ENCODE measurements at regions of chr19 and their contacts with region 1.

Region 1: DNA sequence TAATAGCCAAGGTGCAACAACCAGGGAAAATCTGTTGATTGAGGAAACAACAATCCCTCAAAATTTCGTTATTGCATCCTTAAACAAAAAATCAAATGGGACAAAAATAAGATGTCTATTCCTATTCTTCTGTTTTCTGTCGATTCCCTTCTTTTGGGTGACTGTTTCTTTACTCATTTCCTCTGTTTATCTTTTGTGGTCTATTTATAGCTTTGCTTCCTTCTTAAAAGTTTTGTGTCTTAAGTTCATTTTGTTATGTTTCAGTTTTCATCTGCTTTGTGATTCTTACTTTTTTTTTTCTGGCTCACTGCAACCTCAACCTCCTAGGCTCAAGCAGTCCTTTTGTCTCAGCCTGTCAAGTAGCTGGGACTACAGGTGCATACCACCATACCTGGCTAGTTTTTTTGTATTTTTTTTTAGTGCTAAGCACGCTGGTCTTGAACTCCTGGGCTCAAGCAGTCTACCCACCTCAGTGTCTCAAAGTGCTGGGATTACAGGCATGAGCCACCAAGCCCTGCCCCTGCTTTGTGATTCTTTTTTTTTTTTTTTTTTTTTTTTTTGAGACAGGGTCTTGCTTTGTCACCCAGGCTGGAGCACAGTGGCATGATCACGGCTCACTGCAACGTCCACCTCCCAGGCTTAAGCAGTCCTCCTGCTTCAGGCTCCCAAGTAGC is 10.4 kb downstream of the ZNF146 start:
- DNase-seq: no peak
- ATAC-seq: no peak
- H3K4me3 ChIP-seq: no peak overlapping the region
- H3K27ac ChIP-seq: no peak overlapping the region
- H3K4me1 ChIP-seq: peaks cover 3% of the 10 kb centered on the region; the same call in 1 of the 2 replicates
- H3K27me3 ChIP-seq: no peaks in the 10 kb centered on the region
- CTCF ChIP-seq: no peak

Region 2: DNA sequence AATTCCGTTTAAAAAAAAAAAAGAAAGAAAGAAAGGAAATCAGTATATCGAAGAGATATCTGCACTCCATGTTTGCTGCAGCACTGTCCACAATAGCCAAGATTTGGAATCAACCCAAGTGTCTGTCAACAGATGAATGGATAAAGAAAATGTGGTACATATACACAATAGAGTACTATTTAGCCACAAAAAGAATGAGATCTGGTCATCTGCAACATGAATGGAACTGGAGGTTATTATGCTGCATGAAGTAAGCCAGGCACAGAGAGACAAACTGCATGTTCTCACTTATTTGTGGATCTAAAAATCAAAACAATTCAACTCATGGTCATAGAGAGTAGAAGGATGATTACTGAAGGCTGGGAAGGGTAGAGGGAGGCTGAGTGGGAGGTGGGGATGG is 27.2 kb before region 1 on chr19:
- CTCF ChIA-PET with region 1: interaction called, 14 read pairs
- POLR2A ChIA-PET with region 1: no interaction called
- in situ Hi-C with region 1: no loop called
- intact Hi-C with region 1: no loop called
- DNase-seq: no peak
- ATAC-seq: no peak
- H3K4me3 ChIP-seq: no peak overlapping the region
- H3K27ac ChIP-seq: no peak overlapping the region
- H3K4me1 ChIP-seq: no peaks in the 10 kb centered on the region
- H3K27me3 ChIP-seq: no peaks in the 10 kb centered on the region
- CTCF ChIP-seq: no peak

Region 3: GRCh38 chr19:36214386-36215275 is 10.7 kb before region 1 on chr19 and contains the starts of genes ZNF146 and ZNF565:
- CTCF ChIA-PET with region 1: no interaction called
- POLR2A ChIA-PET with region 1: interaction called, 11 read pairs
- in situ Hi-C with region 1: no loop called
- intact Hi-C with region 1: no loop called
- DNase-seq: peak; percentile 98
- ATAC-seq: peak; percentile 98
- H3K4me3 ChIP-seq: peak within 1 kb of the TSS; percentile 83 to 99
- H3K27ac ChIP-seq: peak within 1 kb of the TSS; percentile 99
- H3K4me1 ChIP-seq: peaks cover 5% of the 10 kb centered on the region; the same call in 1 of the 2 replicates
- H3K27me3 ChIP-seq: no peaks in the 10 kb centered on the region
- CTCF ChIP-seq: no peak
- total RNA-seq, gene ZNF146: 121 TPM
- total RNA-seq, gene ZNF565: 4.9 TPM

Region 4: DNA sequence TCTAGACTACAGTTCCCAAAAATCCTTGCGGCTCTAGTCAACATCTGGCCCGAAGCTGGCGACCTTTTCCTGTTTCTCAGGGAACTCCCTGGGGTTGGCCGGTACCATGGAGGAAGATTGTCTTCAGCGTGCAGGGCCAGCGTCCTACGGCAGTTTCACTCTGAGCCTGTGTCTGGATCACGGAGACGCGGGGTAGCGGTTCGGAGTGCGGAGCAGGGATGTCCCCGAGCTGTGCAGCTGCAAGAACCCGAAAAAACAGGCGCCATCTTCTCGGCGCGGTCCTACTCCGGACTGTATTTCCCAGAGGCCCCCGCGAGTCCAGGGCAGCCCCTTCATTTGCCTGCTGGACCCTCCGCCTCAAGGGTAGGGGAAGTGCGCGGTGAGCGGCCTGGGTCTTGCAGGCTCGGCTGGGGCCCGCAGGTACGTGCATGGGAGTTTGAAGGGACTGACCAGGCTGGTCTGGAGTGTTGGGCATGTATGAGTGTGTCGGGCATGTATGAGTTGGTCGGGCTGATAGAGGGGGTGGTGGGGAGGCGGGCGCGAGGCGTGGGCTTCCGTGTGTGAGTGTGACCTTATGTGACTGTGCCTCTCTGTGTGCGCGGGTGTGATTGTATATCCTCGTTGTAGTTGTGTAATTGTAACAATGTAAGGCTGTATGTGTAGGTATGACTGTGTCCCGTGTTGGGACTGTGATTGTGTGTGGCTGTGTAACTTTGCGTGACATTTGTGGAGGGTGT is 992.7 kb after region 1 on chr19 and contains the start of gene ZNF383:
- CTCF ChIA-PET with region 1: no interaction called
- POLR2A ChIA-PET with region 1: interaction called, 10 read pairs
- in situ Hi-C with region 1: no loop called
- intact Hi-C with region 1: no loop called
- DNase-seq: peak; percentile 90
- ATAC-seq: peak; percentile 99
- H3K4me3 ChIP-seq: peak within 1 kb of the TSS; percentile 66 to 83
- H3K27ac ChIP-seq: peak within 1 kb of the TSS; percentile 96
- H3K4me1 ChIP-seq: no peaks in the 10 kb centered on the region
- H3K27me3 ChIP-seq: no peaks in the 10 kb centered on the region
- CTCF ChIP-seq: no peak
- total RNA-seq, gene ZNF383: 9.1 TPM

Measured in Panc1 (cell line).